Motor neuron (in vitro differentiated cells): ENCODE measurements at regions of chr2 and their contacts with region 1.

Region 1: GRCh38 chr2:26581991-26582842 is 58.9 kb downstream of the CIB4 start:
- ATAC-seq: no peak
- H3K4me3 ChIP-seq: no peak overlapping the region
- H3K27ac ChIP-seq: no peak overlapping the region
- H3K4me1 ChIP-seq: peaks cover 0 to 3% of the 10 kb centered on the region in 2 donors

Region 2: GRCh38 chr2:26509141-26509540 is 73.1 kb before region 1 on chr2:
- in situ Hi-C with region 1: loop called in 1 of 9 experiments (anchors 5 kb)
- ATAC-seq: no peak
- H3K4me3 ChIP-seq: no peak overlapping the region
- H3K27ac ChIP-seq: no peak overlapping the region
- H3K4me1 ChIP-seq: peaks cover 19 to 32% of the 10 kb centered on the region in 2 donors